ENCODE measurements at regions of chr1 and their contacts with region 1.

Region 1: GRCh38 chr1:94237291-94238226 is at the start of gene ARHGAP29:
- DNase-seq: peak; percentile 88 to 91
- H3K4me3 ChIP-seq: peak within 1 kb of the TSS; percentile 87
- H3K27ac ChIP-seq: peak within 1 kb of the TSS; percentile 85
- H3K4me1 ChIP-seq: peaks cover 70% of the 10 kb centered on the region
- H3K27me3 ChIP-seq: no peaks in the 10 kb centered on the region
- CTCF ChIP-seq: no peak
- total RNA-seq, gene ARHGAP29: 123 and 137 TPM in 2 replicates

Region 2: GRCh38 chr1:94068999-94069918 is 168.3 kb before region 1 on chr1:
- CTCF ChIA-PET with region 1: no interaction called
- POLR2A ChIA-PET with region 1: interaction called, 28 read pairs
- intact Hi-C with region 1: loop called (anchors 5 kb)
- DNase-seq: peak; percentile 58 to 97
- H3K4me3 ChIP-seq: no peak overlapping the region
- H3K27ac ChIP-seq: peak overlapping the region; percentile 89
- H3K4me1 ChIP-seq: peaks cover 54% of the 10 kb centered on the region
- H3K27me3 ChIP-seq: no peaks in the 10 kb centered on the region
- CTCF ChIP-seq: no peak

Region 3: GRCh38 chr1:94169126-94169525 is 68.4 kb before region 1 on chr1:
- CTCF ChIA-PET with region 1: no interaction called
- POLR2A ChIA-PET with region 1: no interaction called
- intact Hi-C with region 1: no loop called
- DNase-seq: no peak
- H3K4me3 ChIP-seq: no peak overlapping the region
- H3K27ac ChIP-seq: no peak overlapping the region
- H3K4me1 ChIP-seq: no peaks in the 10 kb centered on the region
- H3K27me3 ChIP-seq: no peaks in the 10 kb centered on the region
- CTCF ChIP-seq: no peak

Region 4: DNA sequence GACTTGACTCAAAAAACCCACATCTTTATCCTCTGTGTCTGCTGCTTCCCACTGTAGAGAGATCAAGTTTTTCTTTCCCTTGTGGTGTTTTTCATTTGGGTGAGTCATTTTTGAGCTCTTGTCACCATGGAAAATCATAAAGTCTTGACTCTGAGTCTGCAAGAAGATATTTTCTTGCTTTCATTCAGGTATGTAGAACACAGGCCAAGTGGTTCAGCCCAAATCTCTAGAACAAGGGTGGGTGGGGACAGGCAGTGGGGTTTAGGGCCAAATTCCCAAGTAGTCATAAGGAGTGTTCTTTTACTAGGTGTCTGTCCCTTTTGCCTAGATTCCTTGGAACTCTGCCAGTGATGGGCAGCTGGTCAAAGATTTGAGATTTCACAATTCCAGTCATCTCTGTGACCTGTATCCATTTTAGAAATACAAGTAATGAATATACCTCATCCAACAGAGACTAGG is 21.3 kb after region 1 on chr1:
- CTCF ChIA-PET with region 1: no interaction called
- POLR2A ChIA-PET with region 1: interaction called, 34 read pairs
- intact Hi-C with region 1: loop called (anchors 1 kb)
- DNase-seq: peak; percentile 91 to 100
- H3K4me3 ChIP-seq: peak overlapping the region; percentile 13; the same call in 1 of the 2 replicates
- H3K27ac ChIP-seq: peak overlapping the region; percentile 98
- H3K4me1 ChIP-seq: peaks cover 74% of the 10 kb centered on the region
- H3K27me3 ChIP-seq: no peaks in the 10 kb centered on the region
- CTCF ChIP-seq: no peak

Region 5: GRCh38 chr1:94417978-94418663 is 180.6 kb after region 1 on chr1 and contains the start of gene ABCD3:
- CTCF ChIA-PET with region 1: no interaction called
- POLR2A ChIA-PET with region 1: no interaction called
- intact Hi-C with region 1: loop called (anchors 5 kb)
- DNase-seq: peak; percentile 94 to 98
- H3K4me3 ChIP-seq: peak within 1 kb of the TSS; percentile 91
- H3K27ac ChIP-seq: peak within 1 kb of the TSS; percentile 45
- H3K4me1 ChIP-seq: peaks cover 47% of the 10 kb centered on the region
- H3K27me3 ChIP-seq: no peaks in the 10 kb centered on the region
- CTCF ChIP-seq: no peak
- total RNA-seq, gene ABCD3: 41.7 and 51.6 TPM in 2 replicates

Region 6: GRCh38 chr1:95309031-95309471 is 1071.5 kb after region 1 on chr1:
- CTCF ChIA-PET with region 1: no interaction called
- POLR2A ChIA-PET with region 1: interaction called, 15 read pairs
- intact Hi-C with region 1: no loop called
- DNase-seq: peak in 1 of 2 experiments; percentile 49
- H3K4me3 ChIP-seq: no peak overlapping the region
- H3K27ac ChIP-seq: no peak overlapping the region
- H3K4me1 ChIP-seq: 0 out of 2 replicates have a peak, but pooled peaks cover 5% of the 10 kb centered on the region
- H3K27me3 ChIP-seq: no peaks in the 10 kb centered on the region
- CTCF ChIP-seq: peak; percentile 87